HepG2 (cell line): ENCODE measurements at regions of chr1 and their contacts with region 1.

Region 1: GRCh38 chr1:182084487-182085316 is 23.2 kb upstream of the ZNF648 start:
- DNase-seq: peak; percentile 78
- ATAC-seq: peak; percentile 95
- H3K4me3 ChIP-seq: peak overlapping the region in 2 of 3 experiments; percentile 6 to 11; a peak in 1 of 6 replicates
- H3K27ac ChIP-seq: no peak overlapping the region
- H3K4me1 ChIP-seq: peaks cover 10% of the 10 kb centered on the region
- H3K27me3 ChIP-seq: peaks cover 2 to 6% of the 10 kb centered on the region in 2 experiments; a peak in 2 of 5 replicates
- CTCF ChIP-seq: peak; percentile 96
- EP300 ChIP-seq: no peak
- POLR2A ChIP-seq: no peak
- RAD21 ChIP-seq: peak; percentile 91

Region 2: DNA sequence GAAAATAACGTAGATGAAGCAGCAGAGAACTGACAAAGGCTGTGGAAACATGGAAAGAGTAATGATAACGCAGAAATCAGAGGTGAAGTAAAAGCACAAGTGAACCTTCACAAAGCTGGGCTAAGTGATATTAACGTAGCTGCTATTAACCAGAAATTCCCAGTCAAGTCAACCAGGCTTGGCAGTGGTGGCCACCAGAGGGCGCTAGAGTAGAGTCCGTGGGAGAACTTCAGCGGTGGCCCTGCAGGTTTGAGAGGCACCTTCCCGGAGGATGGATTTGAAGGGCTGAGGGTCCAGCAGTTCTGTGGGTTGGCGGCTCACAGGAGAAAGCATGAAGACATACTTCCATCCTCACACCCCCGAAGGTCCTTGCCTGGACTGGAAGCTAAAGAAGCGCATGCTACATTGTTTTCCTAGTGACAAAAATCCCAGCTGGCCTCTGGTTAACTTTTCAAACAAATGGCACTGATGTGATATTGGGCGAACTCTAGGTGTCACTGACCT is 58.5 kb after region 1 on chr1:
- CTCF ChIA-PET with region 1: interaction called, 13 read pairs
- POLR2A ChIA-PET with region 1: interaction called, 4 read pairs
- in situ Hi-C with region 1: no loop called
- intact Hi-C with region 1: loop called (anchors 1 kb)
- DNase-seq: peak; percentile 71
- ATAC-seq: peak; percentile 90
- H3K4me3 ChIP-seq: peak overlapping the region in 1 of 3 experiments; percentile 30; a peak in 2 of 6 replicates
- H3K27ac ChIP-seq: no peak overlapping the region
- H3K4me1 ChIP-seq: peaks cover 51% of the 10 kb centered on the region
- H3K27me3 ChIP-seq: no peaks in the 10 kb centered on the region
- CTCF ChIP-seq: peak; percentile 95
- EP300 ChIP-seq: no peak
- POLR2A ChIP-seq: no peak
- RAD21 ChIP-seq: peak; percentile 92

Region 3: DNA sequence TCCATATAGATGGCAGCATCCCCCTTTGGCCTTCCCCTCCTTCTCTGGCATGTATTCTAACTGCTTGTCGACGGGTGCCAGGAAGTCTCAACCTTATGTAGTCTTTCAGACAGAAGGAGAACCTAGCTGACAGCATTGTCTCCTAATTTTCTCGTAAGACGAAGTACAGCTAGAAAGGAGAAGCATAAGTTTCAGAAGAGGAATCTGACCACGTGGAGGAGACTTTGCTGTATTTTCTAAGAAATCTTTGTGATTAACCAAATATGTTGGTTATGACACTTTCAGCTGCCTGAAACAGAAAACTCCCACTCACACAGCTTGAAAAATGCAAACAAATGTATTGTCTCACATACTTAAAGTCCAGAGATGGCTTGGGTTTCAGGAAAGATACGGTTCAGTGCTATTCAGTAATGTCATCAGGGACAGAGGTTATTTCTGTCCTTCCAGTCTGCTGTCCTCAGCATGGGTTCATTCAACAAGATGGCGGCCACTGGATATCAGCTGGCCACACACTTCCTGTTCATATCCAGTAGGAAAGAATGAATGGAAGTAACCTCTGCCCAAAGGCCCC is 86.3 kb after region 1 on chr1:
- CTCF ChIA-PET with region 1: no interaction called
- POLR2A ChIA-PET with region 1: no interaction called
- in situ Hi-C with region 1: no loop called
- intact Hi-C with region 1: no loop called
- DNase-seq: no peak
- ATAC-seq: no peak
- H3K4me3 ChIP-seq: no peak overlapping the region
- H3K27ac ChIP-seq: no peak overlapping the region
- H3K4me1 ChIP-seq: peaks cover 24% of the 10 kb centered on the region
- H3K27me3 ChIP-seq: no peaks in the 10 kb centered on the region
- CTCF ChIP-seq: no peak
- EP300 ChIP-seq: no peak
- POLR2A ChIP-seq: no peak
- RAD21 ChIP-seq: no peak

Region 4: GRCh38 chr1:182301467-182302198 is 216.9 kb after region 1 on chr1:
- CTCF ChIA-PET with region 1: no interaction called
- POLR2A ChIA-PET with region 1: no interaction called
- in situ Hi-C with region 1: no loop called
- intact Hi-C with region 1: loop called (anchors 10 kb)
- DNase-seq: peak; percentile 99
- ATAC-seq: peak; percentile 94
- H3K4me3 ChIP-seq: peak overlapping the region in 2 of 3 experiments; percentile 27 to 38; a peak in 2 of 6 replicates
- H3K27ac ChIP-seq: peak overlapping the region; percentile 97
- H3K4me1 ChIP-seq: peaks cover 83% of the 10 kb centered on the region
- H3K27me3 ChIP-seq: no peaks in the 10 kb centered on the region
- CTCF ChIP-seq: peak; percentile 79
- EP300 ChIP-seq: peak; percentile 95 to 97
- POLR2A ChIP-seq: peak; percentile 25 to 37; a peak in 2 of 4 replicates
- RAD21 ChIP-seq: peak; percentile 68

Region 5: GRCh38 chr1:182397771-182398393 is 313.2 kb after region 1 on chr1:
- CTCF ChIA-PET with region 1: interaction called, 51 read pairs
- POLR2A ChIA-PET with region 1: interaction called, 7 read pairs
- in situ Hi-C with region 1: loop called (anchors 5 kb)
- intact Hi-C with region 1: loop called (anchors 1 kb)
- DNase-seq: no peak
- ATAC-seq: no peak
- H3K4me3 ChIP-seq: no peak overlapping the region
- H3K27ac ChIP-seq: no peak overlapping the region
- H3K4me1 ChIP-seq: peaks cover 38% of the 10 kb centered on the region
- H3K27me3 ChIP-seq: no peaks in the 10 kb centered on the region
- CTCF ChIP-seq: no peak
- EP300 ChIP-seq: no peak
- POLR2A ChIP-seq: no peak
- RAD21 ChIP-seq: no peak

Region 6: DNA sequence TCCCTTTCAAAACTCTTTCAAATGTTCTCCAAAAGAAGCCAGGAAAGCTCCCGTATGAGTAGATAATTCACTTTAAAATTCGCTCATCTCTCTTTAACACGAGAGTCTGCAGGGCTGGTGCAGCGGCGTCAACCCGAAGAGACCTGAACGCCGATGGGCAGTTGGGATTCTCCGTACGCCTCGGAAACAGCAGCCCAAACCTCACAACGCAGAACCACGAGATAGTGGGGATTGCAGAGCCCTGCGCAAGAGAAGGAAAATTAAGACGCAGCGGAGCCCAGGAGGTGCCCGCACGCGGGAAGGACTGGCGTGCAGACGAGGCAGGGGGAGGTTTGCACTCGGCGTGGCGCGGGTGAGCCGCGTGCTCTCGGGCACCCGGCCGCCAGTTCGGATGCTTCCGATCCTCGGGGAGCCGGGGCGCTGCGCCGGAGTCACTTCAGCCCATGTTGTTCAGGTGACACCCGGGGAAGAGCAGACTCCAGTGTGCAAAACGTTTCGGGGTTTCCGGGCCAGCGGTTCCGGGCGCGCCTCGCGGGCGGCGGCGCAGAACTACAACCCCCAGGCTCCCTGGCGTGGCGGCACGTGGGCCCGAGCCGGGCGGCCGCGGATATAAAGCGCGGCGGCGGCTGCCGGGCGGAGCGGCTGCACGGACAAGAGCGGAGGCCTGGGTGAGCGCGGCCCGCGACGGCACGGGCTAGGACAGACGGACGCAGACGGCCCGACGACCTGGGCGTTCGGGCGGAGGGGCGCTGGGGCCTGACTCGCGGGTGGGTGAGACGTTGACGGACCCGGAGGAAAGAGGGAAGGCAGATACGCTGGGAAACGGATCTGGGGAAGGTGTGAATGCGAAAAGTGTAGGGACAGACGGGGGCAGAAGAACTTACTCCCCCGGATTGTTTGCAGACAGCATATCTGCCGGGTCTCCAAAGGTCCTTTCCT is 704.7 kb after region 1 on chr1 and contains the start of gene NPL:
- CTCF ChIA-PET with region 1: interaction called, 5 read pairs
- POLR2A ChIA-PET with region 1: no interaction called
- in situ Hi-C with region 1: loop called (anchors 25 kb)
- intact Hi-C with region 1: no loop called
- DNase-seq: peak; percentile 22
- ATAC-seq: peak; percentile 96
- H3K4me3 ChIP-seq: peak within 1 kb of the TSS; percentile 25 to 62 (median 33); a peak in 5 of 6 replicates
- H3K27ac ChIP-seq: no peak within 1 kb of the TSS
- H3K4me1 ChIP-seq: peaks cover 13% of the 10 kb centered on the region
- H3K27me3 ChIP-seq: peaks cover 8 to 41% of the 10 kb centered on the region in 2 experiments
- CTCF ChIP-seq: no peak; the same call in 1 of the 2 replicates
- EP300 ChIP-seq: no peak
- POLR2A ChIP-seq: no peak
- RAD21 ChIP-seq: no peak
- total RNA-seq, gene NPL: 0.04 TPM in 1 of 2 replicates, not detected in the other